ENCODE measurements at regions of chr10 and their contacts with region 1.

Region 1: DNA sequence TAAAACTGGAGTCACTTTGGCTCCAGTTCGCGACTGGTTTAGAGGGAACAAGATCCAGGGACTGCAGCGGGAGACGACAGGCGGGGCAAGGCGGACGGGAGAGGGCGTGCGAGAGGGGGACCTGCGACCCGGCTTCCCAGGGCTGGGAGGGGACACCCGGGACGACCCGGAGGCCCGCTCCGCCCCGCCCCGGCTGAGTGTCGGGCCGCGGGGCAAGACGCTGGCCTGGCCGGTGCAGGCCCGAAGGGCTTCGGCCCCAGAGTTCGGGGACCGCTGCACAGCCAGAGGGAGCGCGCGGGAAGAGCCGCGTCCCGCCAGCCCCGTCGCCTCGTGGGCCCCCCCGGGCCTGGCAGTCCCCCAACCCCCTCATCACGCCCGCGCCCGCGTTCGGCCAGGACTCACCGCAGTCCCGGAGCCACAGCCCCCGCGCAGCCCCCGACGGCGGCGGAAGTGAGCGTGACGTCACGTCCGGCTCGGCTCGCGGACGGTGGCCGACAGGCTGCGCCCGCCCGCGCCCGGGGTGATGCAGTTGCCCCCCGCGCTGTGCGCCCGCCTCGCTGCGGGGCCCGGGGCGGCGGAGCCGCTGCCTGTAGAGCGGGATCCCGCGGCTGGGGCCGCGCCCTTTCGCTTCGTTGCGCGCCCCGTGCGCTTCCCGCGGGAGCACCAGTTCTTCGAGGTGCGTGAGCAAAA is at the starts of genes TUBGCP2 and ZNF511:
- DNase-seq: peak; percentile 74 to 87
- ATAC-seq: peak; percentile 83 to 86
- H3K4me3 ChIP-seq: peak within 1 kb of the TSS; percentile 94
- H3K27ac ChIP-seq: peak within 1 kb of the TSS; percentile 92 to 97
- H3K4me1 ChIP-seq: peaks cover 14% of the 10 kb centered on the region
- CTCF ChIP-seq: no peak
- EP300 ChIP-seq: no peak
- POLR2A ChIP-seq: peak; percentile 57
- RAD21 ChIP-seq: no peak
- polyA plus RNA-seq, gene TUBGCP2: 44.5 and 44.9 TPM in 2 replicates
- polyA plus RNA-seq, gene ZNF511: 39.4 and 40.2 TPM in 2 replicates

Region 2: GRCh38 chr10:133257489-133258065 is 51.0 kb before region 1 on chr10:
- CTCF ChIA-PET with region 1: interaction called, 22 read pairs
- POLR2A ChIA-PET with region 1: interaction called, 3 read pairs
- DNase-seq: peak; percentile 78 to 87
- ATAC-seq: peak; percentile 52 to 82
- H3K4me3 ChIP-seq: peak overlapping the region; percentile 36
- H3K27ac ChIP-seq: peak overlapping the region; percentile 80 to 91
- H3K4me1 ChIP-seq: peaks cover 41% of the 10 kb centered on the region
- CTCF ChIP-seq: peak; percentile 66
- EP300 ChIP-seq: no peak
- POLR2A ChIP-seq: peak; percentile 46
- RAD21 ChIP-seq: peak; percentile 54 to 55

Region 3: GRCh38 chr10:133278577-133279265 is 29.8 kb before region 1 on chr10:
- CTCF ChIA-PET with region 1: interaction called, 21 read pairs
- POLR2A ChIA-PET with region 1: no interaction called
- DNase-seq: no peak
- ATAC-seq: peak; percentile 1 to 50; a peak in 3 of 6 replicates
- H3K4me3 ChIP-seq: no peak overlapping the region
- H3K27ac ChIP-seq: no peak overlapping the region; a peak in 1 of 6 replicates
- H3K4me1 ChIP-seq: peaks cover 4% of the 10 kb centered on the region; the same call in 1 of the 3 replicates
- CTCF ChIP-seq: no peak
- EP300 ChIP-seq: no peak
- POLR2A ChIP-seq: no peak
- RAD21 ChIP-seq: no peak

Region 4: GRCh38 chr10:133292919-133293809 is 15.4 kb before region 1 on chr10:
- CTCF ChIA-PET with region 1: interaction called, 18 read pairs
- POLR2A ChIA-PET with region 1: no interaction called
- DNase-seq: peak in 1 of 2 experiments; percentile 64
- ATAC-seq: peak; percentile 28 to 38; a peak in 3 of 6 replicates
- H3K4me3 ChIP-seq: no peak overlapping the region
- H3K27ac ChIP-seq: no peak overlapping the region; a peak in 1 of 6 replicates
- H3K4me1 ChIP-seq: peaks cover 9% of the 10 kb centered on the region; the same call in 2 of the 3 replicates
- CTCF ChIP-seq: no peak
- EP300 ChIP-seq: no peak
- POLR2A ChIP-seq: no peak
- RAD21 ChIP-seq: no peak

Region 5: GRCh38 chr10:133318494-133319127 is 10.0 kb after region 1 on chr10:
- CTCF ChIA-PET with region 1: interaction called, 10 read pairs
- POLR2A ChIA-PET with region 1: no interaction called
- DNase-seq: peak; percentile 68 to 84
- ATAC-seq: peak; percentile 87 to 96
- H3K4me3 ChIP-seq: peak overlapping the region; percentile 62
- H3K27ac ChIP-seq: peak overlapping the region; percentile 80 to 98
- H3K4me1 ChIP-seq: 0 out of 3 replicates have a peak, but pooled peaks cover 7% of the 10 kb centered on the region
- CTCF ChIP-seq: peak; percentile 74
- EP300 ChIP-seq: no peak
- POLR2A ChIP-seq: peak; percentile 33
- RAD21 ChIP-seq: peak; percentile 18 to 37; a peak in 2 of 5 replicates

Region 6: DNA sequence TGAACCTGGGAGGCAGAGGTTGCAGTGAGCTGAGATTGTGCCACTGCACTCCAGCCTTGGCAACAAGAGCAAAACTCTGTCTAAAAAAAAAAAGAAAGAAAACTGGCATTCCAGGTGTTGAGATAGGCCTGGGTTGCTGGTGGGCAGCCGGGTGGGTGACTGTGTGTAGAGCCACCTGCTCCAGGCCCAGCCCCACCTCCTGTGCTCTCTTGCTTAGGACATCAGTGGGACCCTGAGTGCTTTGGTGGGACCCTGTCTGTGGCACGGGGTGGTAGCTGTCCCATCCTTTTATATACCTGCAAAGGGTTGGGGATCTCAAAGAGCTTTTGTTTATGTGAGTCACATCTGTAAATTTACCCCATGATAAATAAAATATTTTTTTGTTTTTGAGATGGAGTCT is 76.6 kb after region 1 on chr10:
- CTCF ChIA-PET with region 1: no interaction called
- POLR2A ChIA-PET with region 1: no interaction called
- DNase-seq: no peak
- ATAC-seq: no peak
- H3K4me3 ChIP-seq: no peak overlapping the region
- H3K27ac ChIP-seq: no peak overlapping the region
- H3K4me1 ChIP-seq: peaks cover 2% of the 10 kb centered on the region; the same call in 1 of the 3 replicates
- CTCF ChIP-seq: no peak
- EP300 ChIP-seq: no peak
- POLR2A ChIP-seq: no peak
- RAD21 ChIP-seq: no peak